ENCODE measurements at regions of chr9 and their contacts with region 1.

Region 1: GRCh38 chr9:121686930-121687541 is 35.6 kb downstream of the DAB2IP start:
- DNase-seq: peak; percentile 85
- H3K4me3 ChIP-seq: no peak overlapping the region; a peak in 1 of 4 replicates
- H3K27ac ChIP-seq: no peak overlapping the region
- H3K4me1 ChIP-seq: peaks cover 0 to 4% of the 10 kb centered on the region in 2 experiments; a peak in 1 of 4 replicates
- H3K27me3 ChIP-seq: no peaks in the 10 kb centered on the region
- CTCF ChIP-seq: peak; percentile 93
- EP300 ChIP-seq: no peak
- RAD21 ChIP-seq: peak; percentile 89

Region 2: DNA sequence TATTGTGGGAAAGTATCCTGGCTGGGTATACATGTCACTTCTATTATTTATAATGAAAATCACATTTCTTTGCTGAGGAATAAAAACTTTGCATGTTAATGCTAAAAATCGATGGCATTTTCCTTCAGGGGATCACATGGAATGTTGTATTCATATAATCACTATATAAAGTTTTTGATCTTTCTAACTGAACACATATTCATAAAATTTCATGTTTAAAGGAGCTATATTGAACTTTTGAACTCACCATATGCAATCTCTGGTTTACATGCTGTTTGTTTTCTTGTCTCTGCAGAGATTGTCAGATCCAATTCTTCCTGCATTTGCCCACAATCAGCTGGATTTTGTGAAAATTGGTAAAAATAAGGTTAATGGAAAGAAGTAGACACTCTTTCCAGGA is 727.0 kb before region 1 on chr9:
- CTCF ChIA-PET with region 1: no interaction called
- POLR2A ChIA-PET with region 1: no interaction called
- DNase-seq: no peak
- H3K4me3 ChIP-seq: no peak overlapping the region
- H3K27ac ChIP-seq: no peak overlapping the region
- H3K4me1 ChIP-seq: no peaks in the 10 kb centered on the region
- H3K27me3 ChIP-seq: no peaks in the 10 kb centered on the region
- CTCF ChIP-seq: no peak
- EP300 ChIP-seq: no peak
- RAD21 ChIP-seq: no peak

Region 3: DNA sequence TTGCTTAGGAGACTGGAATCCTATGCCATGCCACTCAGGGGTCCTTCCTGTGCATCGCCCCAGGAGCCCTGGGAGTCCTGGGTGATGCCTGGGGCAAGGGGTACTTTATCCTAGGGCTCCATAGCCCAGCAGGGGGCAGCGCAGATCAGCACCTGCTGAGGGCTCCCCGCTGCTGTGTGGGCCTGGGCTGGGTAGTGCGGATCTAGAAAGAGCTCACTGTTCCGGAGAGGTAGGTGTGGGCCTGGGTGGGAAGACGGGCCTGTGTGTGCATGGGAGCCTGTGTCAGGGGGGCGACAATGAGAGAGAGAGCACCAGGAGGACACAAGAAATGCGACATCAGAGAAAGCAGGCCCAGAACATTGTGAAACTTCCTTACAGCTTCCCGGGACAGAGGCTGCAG is 47.0 kb before region 1 on chr9:
- CTCF ChIA-PET with region 1: interaction called, 194 read pairs
- POLR2A ChIA-PET with region 1: no interaction called
- DNase-seq: peak; percentile 75
- H3K4me3 ChIP-seq: no peak overlapping the region
- H3K27ac ChIP-seq: no peak overlapping the region; a peak in 1 of 4 replicates
- H3K4me1 ChIP-seq: peaks cover 8 to 48% of the 10 kb centered on the region in 2 experiments; a peak in 3 of 4 replicates
- H3K27me3 ChIP-seq: no peaks in the 10 kb centered on the region
- CTCF ChIP-seq: peak; percentile 64
- EP300 ChIP-seq: no peak
- RAD21 ChIP-seq: peak; percentile 66

Region 4: DNA sequence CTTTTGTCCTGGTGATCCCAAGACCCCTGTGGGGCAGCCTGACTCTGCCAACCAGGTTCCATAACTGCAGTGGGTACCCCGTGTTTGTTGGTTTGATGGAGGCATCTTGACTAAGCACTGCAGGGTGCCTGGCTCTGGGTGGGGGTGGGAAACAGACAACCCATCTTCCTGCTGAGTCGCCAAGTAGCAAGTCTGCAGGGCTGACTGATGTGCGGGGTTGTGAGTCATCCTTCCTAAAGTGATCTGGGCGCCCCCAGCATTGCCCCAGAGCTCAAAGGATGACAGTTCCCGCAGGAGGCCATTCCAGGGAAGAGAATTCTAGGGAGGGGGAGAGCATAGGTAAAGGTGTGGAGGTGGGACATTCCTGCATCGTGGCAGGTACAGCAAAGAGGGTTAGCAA is 12.1 kb before region 1 on chr9:
- CTCF ChIA-PET with region 1: interaction called, 21 read pairs
- POLR2A ChIA-PET with region 1: no interaction called
- DNase-seq: no peak
- H3K4me3 ChIP-seq: no peak overlapping the region
- H3K27ac ChIP-seq: no peak overlapping the region; a peak in 1 of 4 replicates
- H3K4me1 ChIP-seq: peaks cover 19 to 25% of the 10 kb centered on the region in 2 experiments; a peak in 3 of 4 replicates
- H3K27me3 ChIP-seq: no peaks in the 10 kb centered on the region
- CTCF ChIP-seq: no peak
- EP300 ChIP-seq: no peak
- RAD21 ChIP-seq: no peak

Region 5: DNA sequence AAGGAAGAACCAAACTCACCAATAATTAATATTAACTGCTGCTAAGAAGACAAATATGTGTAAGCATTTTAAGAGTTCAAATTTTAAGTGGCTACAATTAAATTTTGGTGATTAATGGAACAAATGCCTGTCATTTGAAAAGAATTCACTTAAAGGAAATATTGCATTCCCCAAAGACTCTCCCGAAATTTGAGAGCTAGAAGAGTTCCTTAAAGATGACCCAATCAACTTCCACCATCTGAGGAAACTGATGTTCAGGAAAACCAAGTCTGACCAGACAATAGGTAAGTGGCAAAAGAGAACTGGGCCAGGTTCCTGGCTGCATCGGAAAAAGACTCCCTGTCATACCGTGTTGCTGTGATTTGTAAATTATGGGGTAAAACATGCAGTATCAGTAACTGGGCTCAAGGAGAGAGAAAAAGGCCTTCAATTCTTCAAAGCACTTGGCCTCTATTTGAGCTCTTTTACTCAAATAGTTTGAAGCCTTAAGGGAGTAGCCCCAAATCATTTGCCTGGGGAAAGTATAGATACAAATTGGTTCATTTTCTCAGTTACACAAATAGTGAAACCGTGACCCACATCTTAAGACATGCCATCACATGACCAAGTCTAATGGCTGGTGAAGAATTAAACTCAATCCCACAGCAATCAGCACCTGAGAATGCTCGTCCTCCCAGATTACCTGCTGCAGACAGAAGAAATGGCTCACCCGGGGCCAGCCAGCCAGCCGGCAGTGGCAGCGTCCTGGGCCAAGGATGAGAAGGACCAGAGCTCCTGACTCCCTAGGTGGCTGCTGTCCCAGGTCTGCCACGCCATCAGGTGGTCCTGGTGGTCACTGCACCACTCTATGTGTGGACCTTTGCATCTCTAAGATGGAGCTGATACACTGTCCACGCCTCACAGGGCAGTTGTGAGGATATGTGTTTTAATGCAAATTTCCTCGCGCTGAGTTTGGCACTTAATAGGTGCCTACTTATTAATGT is 243.1 kb after region 1 on chr9:
- CTCF ChIA-PET with region 1: interaction called, 14 read pairs
- POLR2A ChIA-PET with region 1: no interaction called
- DNase-seq: peak; percentile 54
- H3K4me3 ChIP-seq: no peak overlapping the region
- H3K27ac ChIP-seq: peak overlapping the region in 1 of 2 experiments; percentile 29; a peak in 1 of 4 replicates
- H3K4me1 ChIP-seq: no peaks in the 10 kb centered on the region; a peak in 1 of 4 replicates
- H3K27me3 ChIP-seq: no peaks in the 10 kb centered on the region
- CTCF ChIP-seq: peak; percentile 48
- EP300 ChIP-seq: no peak
- RAD21 ChIP-seq: peak; percentile 70

Region 6: DNA sequence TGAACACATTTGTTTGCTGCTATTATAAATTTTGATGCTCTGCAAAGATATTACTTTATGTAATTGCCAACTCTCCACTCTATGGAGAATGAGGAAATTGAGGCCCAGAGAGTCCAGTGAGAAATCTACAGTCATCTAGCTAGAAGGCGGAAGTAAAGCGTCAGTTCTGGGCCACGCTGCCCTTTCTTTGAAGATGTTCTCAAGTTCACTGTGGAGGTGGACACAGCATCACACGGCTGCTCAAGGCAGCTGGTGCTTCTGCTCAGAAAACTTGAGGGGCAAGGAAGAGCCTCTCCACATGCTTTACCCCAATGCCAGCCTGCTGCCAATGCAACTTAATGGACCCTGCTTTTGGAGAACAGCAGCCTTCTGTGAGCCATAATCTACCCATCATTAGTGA is 309.7 kb after region 1 on chr9:
- CTCF ChIA-PET with region 1: interaction called, 10 read pairs
- POLR2A ChIA-PET with region 1: no interaction called
- DNase-seq: no peak
- H3K4me3 ChIP-seq: no peak overlapping the region
- H3K27ac ChIP-seq: no peak overlapping the region
- H3K4me1 ChIP-seq: peaks cover 0 to 4% of the 10 kb centered on the region in 2 experiments; a peak in 2 of 4 replicates
- H3K27me3 ChIP-seq: no peaks in the 10 kb centered on the region
- CTCF ChIP-seq: no peak
- EP300 ChIP-seq: no peak
- RAD21 ChIP-seq: no peak

Measured in SK-N-SH (cell line).